Heart left ventricle (tissue), 16 donors: ENCODE measurements at regions of chr7 and their contacts with region 1.

Region 1: DNA sequence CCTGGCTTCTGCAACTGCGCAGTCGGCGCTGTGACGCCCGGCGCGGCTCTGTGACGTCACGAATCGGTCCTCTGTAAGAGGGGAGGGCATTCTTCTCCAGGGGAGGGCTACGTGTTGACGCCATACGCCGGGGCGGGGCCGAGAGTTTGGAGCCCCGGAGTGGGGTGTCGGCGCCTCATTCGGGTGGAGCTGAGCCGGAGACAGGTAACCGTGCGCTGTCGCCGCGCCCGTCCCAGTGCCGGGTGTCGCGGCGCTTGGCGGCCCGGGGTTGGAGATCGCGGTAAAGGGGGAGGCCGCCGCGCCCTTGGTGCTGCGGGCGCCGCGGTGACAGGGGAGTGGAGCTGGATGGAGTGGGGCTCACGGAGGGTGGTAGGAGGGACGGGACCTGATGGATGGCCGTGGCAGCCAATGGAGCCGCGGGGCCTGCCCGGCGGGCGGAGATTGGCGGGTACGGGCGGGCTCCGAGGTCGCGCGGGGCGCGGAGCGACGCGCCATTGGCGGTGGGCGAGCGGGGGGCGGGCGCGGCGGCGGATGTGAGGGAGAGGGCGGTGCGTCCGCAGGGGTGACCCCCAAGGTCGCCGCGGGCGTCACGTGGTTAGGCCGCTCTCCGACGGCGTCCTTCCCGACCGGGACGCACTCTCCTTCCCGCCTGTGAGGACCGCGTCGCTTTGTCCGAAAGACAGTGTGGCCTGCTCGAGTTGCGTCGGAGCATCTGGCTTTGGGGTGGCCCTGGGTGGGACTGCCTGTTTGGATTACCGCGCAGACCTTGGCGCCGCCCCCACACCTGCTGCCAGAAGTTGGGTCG is at the start of gene OGDH:
- DNase-seq: peak; percentile 99 to 100 (median 99)
- ATAC-seq: peak; percentile 94 to 99 (median 96)
- H3K4me3 ChIP-seq: peak within 1 kb of the TSS; percentile 47 to 93 (median 75)
- H3K27ac ChIP-seq: peak within 1 kb of the TSS; percentile 93 to 99 (median 98)
- H3K4me1 ChIP-seq: peaks cover 0 to 33% (median 23%) of the 10 kb centered on the region in 12 donors
- H3K27me3 ChIP-seq: no peaks in the 10 kb centered on the region
- CTCF ChIP-seq: no peak
- POLR2A ChIP-seq: peak; percentile 85 to 96
- total RNA-seq, gene OGDH: 394 to 789 (median 635) TPM

Region 2: DNA sequence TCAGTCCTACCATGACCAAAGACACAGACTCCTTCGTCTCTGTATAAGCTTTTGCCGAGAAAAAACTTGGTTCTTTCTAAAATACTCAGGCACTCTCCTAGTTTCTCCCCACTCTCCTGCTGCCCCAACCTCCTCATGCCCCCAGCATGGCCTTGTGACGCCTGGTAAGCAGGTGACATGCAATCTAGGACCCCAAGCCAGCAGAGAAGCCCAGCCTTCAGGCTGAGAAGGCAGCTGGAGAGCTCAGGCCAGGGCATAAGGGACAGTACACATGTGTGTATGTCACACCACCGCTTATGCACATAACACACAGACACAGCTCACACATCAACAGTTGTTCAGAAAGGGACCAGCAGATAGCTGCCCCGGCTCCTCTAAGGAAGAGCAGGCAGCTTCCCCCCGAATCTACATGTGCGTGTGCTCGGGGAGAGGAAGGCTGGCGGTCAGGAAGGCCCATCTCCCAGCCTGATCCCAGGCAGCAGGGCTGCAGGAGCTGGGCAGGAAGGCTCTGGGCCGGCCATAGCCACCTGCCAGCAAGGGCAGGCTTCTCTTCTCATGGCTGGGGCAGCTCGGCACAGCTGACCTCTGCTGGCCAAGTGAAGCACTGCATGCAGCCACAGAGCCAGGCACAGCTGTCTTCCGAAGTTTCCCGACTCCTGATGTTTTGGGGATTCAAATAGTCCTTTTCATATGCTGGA is 41.4 kb before region 1 on chr7:
- intact Hi-C with region 1: no loop called
- DNase-seq: peak; percentile 50 to 86 (median 73)
- ATAC-seq: peak; percentile 73 to 91 (median 88)
- H3K4me3 ChIP-seq: no peak overlapping the region
- H3K27ac ChIP-seq: peak overlapping the region in 1 of 12 donors; percentile 37
- H3K4me1 ChIP-seq: peaks cover 0 to 11% (median 1%) of the 10 kb centered on the region in 12 donors
- H3K27me3 ChIP-seq: no peaks in the 10 kb centered on the region
- CTCF ChIP-seq: peak; percentile 92 to 99 (median 97)
- POLR2A ChIP-seq: no peak

Region 3: GRCh38 chr7:44633254-44634186 is 26.9 kb after region 1 on chr7:
- intact Hi-C with region 1: loop called in 1 of 10 experiments (anchors 2 kb)
- DNase-seq: peak in 4 of 5 donors; percentile 57 to 78 (median 66)
- ATAC-seq: peak; percentile 59 to 72 (median 66)
- H3K4me3 ChIP-seq: no peak overlapping the region
- H3K27ac ChIP-seq: peak overlapping the region; percentile 62 to 97 (median 85)
- H3K4me1 ChIP-seq: peaks cover 0 to 99% (median 64%) of the 10 kb centered on the region in 12 donors
- H3K27me3 ChIP-seq: no peaks in the 10 kb centered on the region
- CTCF ChIP-seq: no peak
- POLR2A ChIP-seq: no peak

Region 4: DNA sequence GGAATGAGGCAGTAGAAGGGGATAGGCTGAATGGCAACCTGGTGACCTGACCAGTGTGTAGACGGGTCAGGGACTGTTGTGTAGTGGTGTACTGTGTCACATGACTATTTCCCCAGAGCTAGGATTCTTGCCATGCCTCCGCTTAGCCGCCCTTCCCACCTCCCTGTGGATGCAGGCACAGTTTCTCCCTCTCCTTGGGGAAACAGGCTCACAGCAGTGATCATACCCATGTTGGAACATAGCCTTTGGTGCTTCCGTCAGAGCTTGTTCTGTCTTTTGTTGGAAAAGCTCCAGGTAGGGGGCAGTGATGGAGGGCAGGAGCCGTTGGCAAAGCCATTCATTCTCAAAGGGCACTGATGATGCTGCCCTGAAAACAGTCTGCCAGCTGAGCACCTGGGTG is 44.1 kb after region 1 on chr7:
- intact Hi-C with region 1: loop called in 2 of 10 experiments (anchors 5 kb)
- DNase-seq: peak in 4 of 5 donors; percentile 67 to 87 (median 73)
- ATAC-seq: peak; percentile 88 to 94 (median 92)
- H3K4me3 ChIP-seq: no peak overlapping the region
- H3K27ac ChIP-seq: peak overlapping the region; percentile 48 to 90 (median 79)
- H3K4me1 ChIP-seq: peaks cover 0 to 38% (median 12%) of the 10 kb centered on the region in 12 donors
- H3K27me3 ChIP-seq: no peaks in the 10 kb centered on the region
- CTCF ChIP-seq: peak in 1 of 12 donors; percentile 8
- POLR2A ChIP-seq: no peak

Region 5: GRCh38 chr7:44740055-44740454 is 133.4 kb after region 1 on chr7:
- intact Hi-C with region 1: loop called in 3 of 10 experiments (anchors 5 to 10 kb)
- DNase-seq: no peak
- ATAC-seq: peak in 1 of 4 donors; percentile 31
- H3K4me3 ChIP-seq: no peak overlapping the region
- H3K27ac ChIP-seq: no peak overlapping the region
- H3K4me1 ChIP-seq: peaks cover 0 to 5% (median 0%) of the 10 kb centered on the region in 12 donors
- H3K27me3 ChIP-seq: no peaks in the 10 kb centered on the region
- CTCF ChIP-seq: no peak
- POLR2A ChIP-seq: no peak

Region 6: GRCh38 chr7:44797329-44798251 is 190.9 kb after region 1 on chr7:
- intact Hi-C with region 1: loop called in 3 of 10 experiments (anchors 1 to 2 kb)
- DNase-seq: peak; percentile 91 to 94 (median 92)
- ATAC-seq: peak; percentile 79 to 89 (median 82)
- H3K4me3 ChIP-seq: peak overlapping the region; percentile 60 to 97 (median 80)
- H3K27ac ChIP-seq: peak overlapping the region; percentile 95 to 100 (median 98)
- H3K4me1 ChIP-seq: peaks cover 7 to 35% (median 23%) of the 10 kb centered on the region in 12 donors
- H3K27me3 ChIP-seq: no peaks in the 10 kb centered on the region
- CTCF ChIP-seq: peak in 11 of 12 donors; percentile 21 to 66 (median 53)
- POLR2A ChIP-seq: peak in 1 of 2 donors; percentile 24